ENCODE measurements at regions of chr1 and their contacts with region 1.

Region 1: GRCh38 chr1:214123061-214123784 is 135.4 kb downstream of the PROX1 start:
- DNase-seq: peak; percentile 48
- H3K4me3 ChIP-seq: no peak overlapping the region
- H3K27ac ChIP-seq: no peak overlapping the region
- H3K4me1 ChIP-seq: peaks cover 0 to 3% (median 0%) of the 10 kb centered on the region in 4 donors
- H3K27me3 ChIP-seq: no peaks in the 10 kb centered on the region
- CTCF ChIP-seq: peak; percentile 41 to 74 (median 55)
- EP300 ChIP-seq: no peak
- POLR2A ChIP-seq: no peak

Region 2: DNA sequence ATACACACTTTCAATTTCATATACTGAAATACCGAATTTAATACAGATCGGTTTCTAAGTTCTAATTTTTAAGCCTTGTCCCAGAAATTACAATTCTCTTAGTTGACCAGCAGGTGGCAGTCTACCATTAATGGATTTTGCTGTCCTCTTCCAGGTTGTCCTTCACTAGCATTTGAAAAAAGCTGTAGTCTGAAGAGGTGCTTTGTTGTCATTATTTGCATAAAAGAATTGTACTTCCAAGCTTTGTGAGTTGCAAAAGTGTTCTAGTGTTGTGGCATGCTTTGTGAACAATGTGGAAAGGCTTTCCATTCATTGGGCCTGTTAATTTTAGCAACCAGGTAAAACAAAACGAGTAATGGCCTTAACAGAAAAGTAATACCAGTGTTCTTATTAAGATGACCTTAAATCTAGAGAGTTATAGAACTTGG is 878.5 kb before region 1 on chr1:
- in situ Hi-C with region 1: loop called in 1 of 4 experiments (anchors 25 kb)
- intact Hi-C with region 1: no loop called
- DNase-seq: peak; percentile 9
- H3K4me3 ChIP-seq: no peak overlapping the region
- H3K27ac ChIP-seq: no peak overlapping the region
- H3K4me1 ChIP-seq: no peaks in the 10 kb centered on the region
- H3K27me3 ChIP-seq: no peaks in the 10 kb centered on the region
- CTCF ChIP-seq: peak; percentile 61 to 84 (median 73)
- EP300 ChIP-seq: no peak
- POLR2A ChIP-seq: no peak

Region 3: GRCh38 chr1:214416417-214416816 is 293.2 kb after region 1 on chr1:
- in situ Hi-C with region 1: no loop called
- intact Hi-C with region 1: no loop called
- DNase-seq: no peak
- H3K4me3 ChIP-seq: no peak overlapping the region
- H3K27ac ChIP-seq: peak overlapping the region in 1 of 4 donors; percentile 23
- H3K4me1 ChIP-seq: peaks cover 0 to 16% (median 0%) of the 10 kb centered on the region in 4 donors
- H3K27me3 ChIP-seq: no peaks in the 10 kb centered on the region
- CTCF ChIP-seq: no peak
- EP300 ChIP-seq: no peak
- POLR2A ChIP-seq: no peak

Measured in transverse colon (tissue), 4 donors.